A549 (cell line): ENCODE measurements at regions of chr2 and their contacts with region 1.

Region 1: DNA sequence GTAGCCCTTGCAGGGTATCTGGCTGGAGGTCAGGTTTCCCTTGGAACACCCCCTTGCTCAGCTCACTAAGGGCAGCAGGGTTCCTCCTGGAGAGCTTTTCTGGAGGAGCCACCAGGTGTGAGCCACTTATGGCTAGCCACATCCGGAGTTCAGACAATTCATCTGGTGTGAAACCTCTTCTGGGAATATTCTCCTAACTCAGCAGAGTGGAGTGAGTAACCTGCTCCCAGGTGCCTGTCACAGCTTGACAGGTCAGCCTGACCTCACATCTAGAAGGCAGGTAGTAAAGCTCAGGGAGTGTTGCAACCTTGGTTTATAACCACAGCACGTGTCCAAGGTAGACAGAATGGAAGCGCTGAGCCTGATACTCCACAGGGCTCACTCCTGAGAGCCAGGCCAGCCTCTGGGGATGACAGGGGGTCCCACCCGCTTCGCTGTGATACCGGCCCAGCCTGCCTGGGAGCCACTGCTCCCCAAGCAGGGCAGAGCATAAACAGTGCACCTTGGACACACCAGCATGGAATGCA is 62.6 kb upstream of the TGFA start:
- DNase-seq: no peak
- ATAC-seq: no peak
- H3K4me3 ChIP-seq: no peak overlapping the region
- H3K27ac ChIP-seq: no peak overlapping the region
- H3K4me1 ChIP-seq: no peaks in the 10 kb centered on the region
- CTCF ChIP-seq: no peak
- EP300 ChIP-seq: no peak
- POLR2A ChIP-seq: no peak
- RAD21 ChIP-seq: no peak

Region 2: GRCh38 chr2:70310899-70311298 is 305.3 kb before region 1 on chr2:
- CTCF ChIA-PET with region 1: interaction called, 182 read pairs
- POLR2A ChIA-PET with region 1: no interaction called
- DNase-seq: no peak
- ATAC-seq: peak in 1 of 2 experiments; percentile 38; a peak in 1 of 6 replicates
- H3K4me3 ChIP-seq: no peak overlapping the region
- H3K27ac ChIP-seq: no peak overlapping the region
- H3K4me1 ChIP-seq: no peaks in the 10 kb centered on the region
- CTCF ChIP-seq: no peak
- EP300 ChIP-seq: no peak
- POLR2A ChIP-seq: no peak
- RAD21 ChIP-seq: no peak

Region 3: GRCh38 chr2:70340921-70341765 is 275.1 kb before region 1 on chr2:
- CTCF ChIA-PET with region 1: interaction called, 202 read pairs
- POLR2A ChIA-PET with region 1: no interaction called
- DNase-seq: peak; percentile 60 to 91
- ATAC-seq: peak; percentile 66 to 88; a peak in 5 of 6 replicates
- H3K4me3 ChIP-seq: no peak overlapping the region
- H3K27ac ChIP-seq: no peak overlapping the region
- H3K4me1 ChIP-seq: peaks cover 9% of the 10 kb centered on the region; the same call in 1 of the 3 replicates
- CTCF ChIP-seq: peak; percentile 98
- EP300 ChIP-seq: no peak
- POLR2A ChIP-seq: no peak
- RAD21 ChIP-seq: peak; percentile 97 to 98

Region 4: DNA sequence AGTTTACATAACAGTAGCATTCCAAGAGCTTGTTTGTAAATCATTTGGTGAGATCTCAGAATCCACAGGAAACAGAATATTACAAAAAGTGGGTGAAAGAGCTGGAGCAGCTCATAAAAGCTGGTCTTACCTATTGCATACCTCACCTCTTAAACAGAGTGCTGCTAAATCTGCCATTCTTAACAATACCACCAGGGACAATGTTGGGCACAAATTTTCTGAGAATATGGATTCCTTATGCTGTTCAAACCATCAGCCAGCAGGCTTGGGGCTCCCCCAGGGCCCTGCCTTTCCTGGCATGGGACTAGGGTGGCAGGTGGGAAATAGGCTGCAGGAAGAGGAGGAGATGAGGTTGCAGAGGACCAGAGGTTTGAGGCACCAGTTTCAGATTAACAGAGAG is 118.2 kb before region 1 on chr2:
- CTCF ChIA-PET with region 1: interaction called, 19 read pairs
- POLR2A ChIA-PET with region 1: no interaction called
- DNase-seq: peak; percentile 42 to 52
- ATAC-seq: peak; percentile 90 to 99
- H3K4me3 ChIP-seq: no peak overlapping the region
- H3K27ac ChIP-seq: no peak overlapping the region
- H3K4me1 ChIP-seq: 0 out of 3 replicates have a peak, but pooled peaks cover 3% of the 10 kb centered on the region
- CTCF ChIP-seq: peak; percentile 30; the same call in 1 of the 3 replicates
- EP300 ChIP-seq: no peak
- POLR2A ChIP-seq: no peak
- RAD21 ChIP-seq: peak in 1 of 2 experiments; percentile 39; a peak in 3 of 5 replicates

Region 5: GRCh38 chr2:70627211-70627902 is 11.1 kb after region 1 on chr2:
- CTCF ChIA-PET with region 1: interaction called, 70 read pairs
- POLR2A ChIA-PET with region 1: no interaction called
- DNase-seq: peak in 1 of 2 experiments; percentile 64
- ATAC-seq: no peak
- H3K4me3 ChIP-seq: no peak overlapping the region
- H3K27ac ChIP-seq: no peak overlapping the region
- H3K4me1 ChIP-seq: peaks cover 8% of the 10 kb centered on the region
- CTCF ChIP-seq: no peak
- EP300 ChIP-seq: no peak
- POLR2A ChIP-seq: no peak
- RAD21 ChIP-seq: no peak

Region 6: DNA sequence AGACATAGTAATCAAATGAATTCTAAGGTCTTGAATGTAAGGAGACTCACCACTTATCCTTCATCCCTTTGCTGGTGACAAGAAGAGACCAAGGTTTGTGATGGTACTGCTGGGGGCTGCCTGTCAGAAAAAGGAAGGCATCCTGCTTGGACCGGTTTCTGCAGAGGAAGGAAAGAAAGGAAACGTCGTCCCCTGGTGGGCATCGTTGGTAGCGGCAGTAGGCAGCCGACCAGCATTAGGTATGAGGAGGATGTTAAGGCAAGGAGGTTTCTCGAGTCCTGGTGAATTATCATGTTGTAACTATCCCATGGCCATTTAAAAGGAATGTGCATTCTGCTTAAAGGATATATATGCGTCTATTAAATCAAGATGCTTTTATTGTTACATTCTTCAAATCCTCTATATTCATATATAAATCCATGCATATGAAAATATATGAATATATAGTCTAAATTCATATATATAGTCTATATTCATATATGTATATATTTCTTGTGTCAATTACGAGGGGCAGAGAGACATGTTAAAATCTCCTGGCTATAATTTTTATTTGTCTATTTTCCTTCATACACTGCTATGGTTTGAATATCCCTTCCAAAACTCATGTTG is 31.7 kb after region 1 on chr2:
- CTCF ChIA-PET with region 1: interaction called, 42 read pairs
- POLR2A ChIA-PET with region 1: no interaction called
- DNase-seq: peak; percentile 48 to 72
- ATAC-seq: peak; percentile 73 to 88
- H3K4me3 ChIP-seq: no peak overlapping the region
- H3K27ac ChIP-seq: no peak overlapping the region
- H3K4me1 ChIP-seq: no peaks in the 10 kb centered on the region
- CTCF ChIP-seq: peak; percentile 98
- EP300 ChIP-seq: no peak
- POLR2A ChIP-seq: no peak
- RAD21 ChIP-seq: peak; percentile 97 to 99

Region 7: DNA sequence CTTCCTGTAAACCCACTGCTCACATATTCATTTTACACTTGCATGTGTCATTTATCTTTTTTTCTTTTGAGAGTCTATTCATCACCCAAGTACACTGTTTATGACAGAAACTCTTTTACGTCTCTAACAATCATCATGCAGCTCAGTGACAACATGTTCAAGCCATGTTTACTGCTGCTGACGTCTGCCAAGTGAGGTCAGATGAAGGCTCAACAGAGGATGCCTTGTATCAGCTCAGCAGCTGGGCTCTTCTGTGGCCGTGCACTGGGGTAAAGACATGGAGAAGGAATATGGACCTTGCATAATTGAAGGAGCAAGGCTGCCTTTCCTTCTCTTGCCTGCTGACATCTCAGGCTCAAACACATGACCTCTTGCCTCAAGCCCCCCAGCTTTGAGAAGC is 52.2 kb after region 1 on chr2:
- CTCF ChIA-PET with region 1: no interaction called
- POLR2A ChIA-PET with region 1: no interaction called
- DNase-seq: no peak
- ATAC-seq: no peak
- H3K4me3 ChIP-seq: no peak overlapping the region
- H3K27ac ChIP-seq: no peak overlapping the region
- H3K4me1 ChIP-seq: 0 out of 3 replicates have a peak, but pooled peaks cover 5% of the 10 kb centered on the region
- CTCF ChIP-seq: no peak
- EP300 ChIP-seq: no peak
- POLR2A ChIP-seq: no peak
- RAD21 ChIP-seq: no peak

Region 8: DNA sequence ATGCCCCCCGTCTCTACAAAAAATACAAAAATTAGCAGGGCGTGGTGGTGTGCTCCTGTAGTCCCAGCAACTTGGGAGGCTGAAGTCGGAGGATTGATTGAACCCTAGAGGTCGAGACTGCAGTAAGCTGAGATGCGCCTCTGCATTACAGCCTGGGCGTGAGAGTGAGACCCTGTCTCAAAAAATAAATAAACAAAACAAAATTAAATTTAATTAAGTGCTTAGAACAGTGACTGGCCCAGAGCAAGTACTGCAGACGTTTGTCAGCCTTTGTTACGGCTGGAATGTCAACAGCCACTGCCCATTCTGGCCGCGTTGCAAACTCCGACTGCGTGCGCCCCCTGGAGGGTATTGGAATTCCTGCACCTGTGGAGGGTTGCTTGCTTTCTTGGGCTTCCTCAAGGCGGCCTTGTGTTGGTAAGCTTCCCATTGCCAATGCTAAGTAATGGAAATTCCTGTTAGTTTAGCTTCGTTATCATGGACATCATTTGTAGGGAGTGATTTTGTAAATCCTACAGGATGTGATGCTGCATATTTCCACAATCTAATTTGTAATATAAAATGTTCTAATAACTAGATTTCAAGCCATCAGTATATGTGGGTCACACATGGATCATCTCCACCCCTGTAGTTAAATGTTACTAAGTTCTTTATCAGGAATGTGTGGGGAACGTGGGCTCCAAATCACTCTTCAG is 303.6 kb after region 1 on chr2:
- CTCF ChIA-PET with region 1: no interaction called
- POLR2A ChIA-PET with region 1: no interaction called
- DNase-seq: peak; percentile 77 to 87
- ATAC-seq: peak; percentile 90 to 95
- H3K4me3 ChIP-seq: no peak overlapping the region
- H3K27ac ChIP-seq: no peak overlapping the region
- H3K4me1 ChIP-seq: no peaks in the 10 kb centered on the region
- CTCF ChIP-seq: peak; percentile 97
- EP300 ChIP-seq: no peak
- POLR2A ChIP-seq: no peak
- RAD21 ChIP-seq: peak; percentile 81 to 89